ENCODE measurements at regions of chr4 and their contacts with region 1.

Region 1: DNA sequence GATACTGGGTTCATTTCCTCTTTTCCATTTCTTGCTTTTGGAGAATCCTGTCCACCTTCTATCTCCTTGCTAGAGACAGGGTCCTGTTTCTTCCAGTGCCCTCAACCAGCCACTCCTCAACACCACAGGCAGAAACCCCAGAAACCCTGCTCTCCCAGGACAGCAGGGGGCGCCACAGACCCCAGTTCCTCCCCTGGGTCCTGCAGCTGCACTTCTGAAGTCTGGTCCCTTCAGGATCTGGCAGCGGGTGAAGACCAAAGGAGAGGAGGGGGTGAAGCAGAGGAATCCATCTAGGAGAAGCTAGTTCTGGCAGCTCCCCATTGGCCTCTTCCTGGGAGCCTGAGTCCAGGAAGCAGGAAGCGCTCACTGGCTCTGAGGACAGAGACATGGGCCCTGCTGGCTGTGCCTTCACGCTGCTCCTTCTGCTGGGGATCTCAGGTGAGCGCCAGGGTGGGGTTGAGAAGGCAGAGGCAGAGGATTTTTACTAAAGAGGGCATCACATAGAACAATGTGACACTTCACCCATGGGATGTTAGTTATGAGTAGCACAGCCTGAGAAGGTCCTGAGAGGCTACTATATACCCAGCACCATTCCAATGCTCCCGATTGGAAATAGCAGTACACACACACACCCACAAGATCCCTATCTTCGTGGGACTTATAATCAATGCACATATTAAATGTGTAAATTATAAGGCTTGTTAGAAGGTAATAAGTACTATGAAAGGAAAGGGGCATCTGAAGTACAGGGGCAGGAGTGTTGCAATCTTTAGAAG is at the start of gene PRSS48:
- DNase-seq: peak; percentile 34 to 52
- ATAC-seq: peak; percentile 85 to 95
- H3K4me3 ChIP-seq: no peak within 1 kb of the TSS
- H3K27ac ChIP-seq: no peak within 1 kb of the TSS
- H3K4me1 ChIP-seq: no peaks in the 10 kb centered on the region
- CTCF ChIP-seq: peak; percentile 59
- EP300 ChIP-seq: no peak
- POLR2A ChIP-seq: no peak
- RAD21 ChIP-seq: peak; percentile 65 to 82
- polyA plus RNA-seq, gene PRSS48: not detected in 2 replicates

Region 2: DNA sequence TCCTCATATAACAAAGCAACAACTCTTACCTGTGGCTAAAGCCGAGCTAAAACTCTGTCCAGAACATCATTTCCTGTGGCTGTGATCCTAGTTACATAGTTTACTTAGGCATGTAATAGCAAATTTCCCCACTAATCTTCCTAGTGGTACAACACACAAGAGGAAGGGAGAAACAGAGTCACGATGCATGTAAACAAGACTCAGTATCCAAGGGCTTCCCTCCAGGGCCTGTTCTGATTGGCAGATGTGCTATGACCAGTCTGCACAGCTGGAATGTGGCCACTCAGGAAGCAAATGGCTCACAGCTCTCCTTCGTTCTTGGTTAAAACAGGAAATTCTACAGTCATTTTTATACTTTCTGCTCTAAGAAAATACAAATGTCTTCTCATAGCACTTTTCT is 49.2 kb before region 1 on chr4:
- CTCF ChIA-PET with region 1: no interaction called
- POLR2A ChIA-PET with region 1: no interaction called
- DNase-seq: peak in 1 of 2 experiments; percentile 33
- ATAC-seq: peak; percentile 39 to 86; a peak in 3 of 6 replicates
- H3K4me3 ChIP-seq: no peak overlapping the region
- H3K27ac ChIP-seq: no peak overlapping the region
- H3K4me1 ChIP-seq: peaks cover 35% of the 10 kb centered on the region
- CTCF ChIP-seq: no peak
- EP300 ChIP-seq: no peak
- POLR2A ChIP-seq: no peak
- RAD21 ChIP-seq: no peak

Region 3: DNA sequence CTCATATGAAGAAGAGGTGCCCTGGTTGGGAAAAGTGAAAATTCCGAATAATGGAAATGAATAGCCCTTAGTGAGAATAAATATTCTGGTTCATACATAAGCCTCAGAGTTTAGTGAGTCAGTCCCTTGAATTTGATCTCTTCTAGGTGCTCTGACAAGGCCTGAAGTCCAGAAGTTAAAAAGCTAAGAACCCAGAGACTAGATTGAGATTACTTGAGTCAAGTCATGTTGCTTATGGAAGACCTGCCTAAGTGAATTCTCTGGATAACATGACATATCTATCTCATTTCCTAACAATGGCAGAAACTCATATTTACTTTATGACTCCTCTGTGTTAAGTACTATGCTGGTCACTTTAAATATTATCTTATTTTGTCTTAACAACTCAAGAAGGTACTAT is 10.5 kb before region 1 on chr4:
- CTCF ChIA-PET with region 1: interaction called, 12 read pairs
- POLR2A ChIA-PET with region 1: no interaction called
- DNase-seq: no peak
- ATAC-seq: no peak
- H3K4me3 ChIP-seq: no peak overlapping the region
- H3K27ac ChIP-seq: no peak overlapping the region
- H3K4me1 ChIP-seq: peaks cover 6% of the 10 kb centered on the region; the same call in 1 of the 3 replicates
- CTCF ChIP-seq: no peak
- EP300 ChIP-seq: no peak
- POLR2A ChIP-seq: no peak
- RAD21 ChIP-seq: no peak